Heart left ventricle (tissue), 16 donors: ENCODE measurements at regions of chr5 and their contacts with region 1.

Region 1: DNA sequence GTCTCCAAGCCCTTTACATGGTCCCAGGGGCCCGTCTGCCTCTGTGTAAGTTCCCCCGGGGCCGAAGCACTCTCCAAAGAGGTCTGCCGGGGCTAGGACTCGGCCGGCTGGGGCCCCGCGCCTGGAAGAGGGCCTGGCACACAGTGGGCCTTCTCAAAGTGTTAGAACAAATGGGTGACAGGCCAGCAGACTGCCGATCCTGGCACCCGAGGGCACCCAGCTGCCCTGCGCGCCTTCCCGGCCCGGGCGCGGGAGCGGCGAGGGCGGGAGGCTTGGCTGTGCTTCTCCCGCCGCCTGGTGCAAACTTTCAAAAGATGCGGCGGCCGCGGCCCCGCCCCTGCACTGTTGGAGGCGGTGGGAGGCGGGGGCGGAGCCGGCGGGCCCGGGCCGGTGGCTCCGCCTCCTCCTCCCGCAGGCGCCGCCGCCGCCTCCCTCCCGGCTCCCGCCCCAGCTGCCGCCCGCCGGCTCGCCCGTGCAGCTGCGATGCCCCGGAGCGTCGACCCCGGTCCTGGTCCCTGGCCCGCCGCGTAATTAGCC is at the start of gene NEURL1B:
- DNase-seq: peak; percentile 81 to 91 (median 89)
- ATAC-seq: peak; percentile 68 to 88 (median 82)
- H3K4me3 ChIP-seq: peak within 1 kb of the TSS; percentile 73 to 98 (median 88)
- H3K27ac ChIP-seq: peak within 1 kb of the TSS; percentile 93 to 99 (median 98)
- H3K4me1 ChIP-seq: peaks cover 0 to 50% (median 26%) of the 10 kb centered on the region in 12 donors
- H3K27me3 ChIP-seq: peaks cover 0 to 11% (median 0%) of the 10 kb centered on the region in 9 donors
- CTCF ChIP-seq: peak in 7 of 12 donors; percentile 5 to 53 (median 29)
- POLR2A ChIP-seq: peak in 1 of 2 donors; percentile 59
- total RNA-seq, gene NEURL1B: 16.1 to 47.1 (median 25.8) TPM

Region 2: DNA sequence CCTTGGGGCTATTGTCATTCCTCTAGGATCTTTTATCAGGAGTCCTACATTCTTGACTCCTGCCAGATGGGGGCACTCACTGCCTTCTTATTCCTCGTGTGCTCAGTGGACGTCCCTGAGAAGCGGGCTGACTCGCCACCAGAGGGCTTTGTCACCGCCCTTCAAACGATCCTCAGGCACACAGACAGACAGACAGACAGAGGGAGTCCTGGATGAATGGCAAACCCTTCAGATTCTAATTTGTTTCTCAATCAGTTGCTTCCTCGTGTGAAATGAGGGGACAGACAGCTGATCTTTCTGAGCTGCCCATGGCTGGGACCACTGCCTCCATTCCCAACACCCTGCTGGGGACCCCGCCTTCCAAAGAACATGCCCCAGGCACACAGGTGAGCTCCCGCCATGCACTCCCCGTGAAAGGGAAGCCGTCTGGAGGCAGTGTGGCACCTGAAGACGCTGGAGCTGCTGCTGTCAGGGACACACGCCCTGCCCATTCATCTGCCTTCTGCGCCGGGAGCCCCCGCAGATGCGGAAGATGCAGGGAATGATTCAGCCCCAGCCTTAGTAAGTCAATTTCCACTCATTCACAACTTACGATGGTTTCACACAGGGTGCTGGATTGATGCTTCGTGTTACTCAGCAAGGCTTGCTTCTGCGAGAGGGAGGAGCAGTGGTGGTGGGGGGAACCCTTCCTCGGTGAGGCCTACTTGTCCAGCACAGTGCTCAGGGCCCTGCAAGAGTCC is 161.7 kb before region 1 on chr5:
- intact Hi-C with region 1: loop called in 8 of 10 experiments (anchors 1 to 5 kb)
- DNase-seq: peak; percentile 88 to 93 (median 89)
- ATAC-seq: peak; percentile 88 to 97 (median 96)
- H3K4me3 ChIP-seq: peak overlapping the region in 7 of 12 donors; percentile 8 to 39 (median 23)
- H3K27ac ChIP-seq: peak overlapping the region in 11 of 12 donors; percentile 31 to 81 (median 72)
- H3K4me1 ChIP-seq: peaks cover 0 to 27% (median 12%) of the 10 kb centered on the region in 12 donors
- H3K27me3 ChIP-seq: no peaks in the 10 kb centered on the region
- CTCF ChIP-seq: peak; percentile 75 to 97 (median 89)
- POLR2A ChIP-seq: no peak

Region 3: DNA sequence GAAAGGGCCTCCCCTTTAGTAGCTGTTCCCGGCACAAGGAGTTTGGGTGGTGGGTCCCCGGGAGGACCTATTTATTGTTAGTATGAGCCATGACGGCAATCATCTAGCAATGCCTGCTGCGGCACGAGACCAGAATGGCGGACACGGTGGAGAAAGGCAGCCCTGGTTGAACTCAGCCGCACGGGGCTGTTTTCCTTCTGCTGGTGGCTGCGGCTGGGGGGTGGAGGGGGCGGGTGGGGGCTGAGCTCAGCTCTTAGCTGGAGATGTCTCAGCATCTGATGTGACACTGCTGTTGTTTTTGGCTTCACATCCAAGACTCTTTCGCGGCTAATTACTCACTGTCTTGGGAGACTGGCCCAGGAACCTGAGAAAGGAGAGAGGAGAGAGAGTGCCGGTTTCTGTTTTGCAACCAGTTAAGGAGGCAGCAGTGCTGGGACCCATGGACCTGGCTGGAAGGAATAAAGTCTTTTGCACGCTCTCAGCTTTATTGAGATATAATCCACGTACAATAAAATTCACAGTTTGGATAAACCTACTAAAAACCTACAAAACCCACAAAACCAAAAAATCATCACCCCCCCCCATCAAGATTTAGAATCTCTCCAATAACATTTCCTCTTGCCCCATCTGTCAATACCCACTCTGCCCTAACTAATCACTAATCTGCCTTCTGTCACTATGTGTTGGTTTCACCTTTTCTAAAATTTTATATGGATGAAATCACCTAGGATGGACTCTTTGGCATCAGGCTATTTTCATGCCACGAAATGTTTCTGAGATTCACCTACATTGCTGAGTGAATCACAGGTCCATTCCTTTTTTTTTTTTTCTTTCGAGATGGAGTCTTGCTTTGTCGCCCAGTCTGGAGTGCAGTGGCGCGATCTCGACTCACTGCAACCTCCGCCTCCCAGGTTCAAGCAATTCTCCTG is 81.6 kb before region 1 on chr5:
- intact Hi-C with region 1: loop called in 3 of 10 experiments (anchors 5 to 10 kb)
- DNase-seq: peak; percentile 43 to 80 (median 66)
- ATAC-seq: peak; percentile 13 to 75 (median 63)
- H3K4me3 ChIP-seq: peak overlapping the region in 10 of 12 donors; percentile 5 to 50 (median 24)
- H3K27ac ChIP-seq: peak overlapping the region in 11 of 12 donors; percentile 68 to 90 (median 78)
- H3K4me1 ChIP-seq: peaks cover 10 to 46% (median 34%) of the 10 kb centered on the region in 12 donors
- H3K27me3 ChIP-seq: no peaks in the 10 kb centered on the region
- CTCF ChIP-seq: no peak
- POLR2A ChIP-seq: no peak

Region 4: GRCh38 chr5:172603251-172603806 is 37.6 kb before region 1 on chr5:
- intact Hi-C with region 1: loop called in 3 of 10 experiments (anchors 5 kb)
- DNase-seq: peak in 3 of 5 donors; percentile 59 to 68 (median 68)
- ATAC-seq: peak in 3 of 4 donors; percentile 17 to 68 (median 55)
- H3K4me3 ChIP-seq: peak overlapping the region in 5 of 12 donors; percentile 14 to 29 (median 17)
- H3K27ac ChIP-seq: peak overlapping the region; percentile 76 to 94 (median 83)
- H3K4me1 ChIP-seq: peaks cover 0 to 69% (median 37%) of the 10 kb centered on the region in 12 donors
- H3K27me3 ChIP-seq: no peaks in the 10 kb centered on the region
- CTCF ChIP-seq: no peak
- POLR2A ChIP-seq: no peak

Region 5: GRCh38 chr5:172688349-172689217 is 47.7 kb after region 1 on chr5:
- intact Hi-C with region 1: loop called in 5 of 10 experiments (anchors 5 to 10 kb)
- DNase-seq: peak in 3 of 5 donors; percentile 50 to 68 (median 61)
- ATAC-seq: peak; percentile 17 to 59 (median 52)
- H3K4me3 ChIP-seq: no peak overlapping the region
- H3K27ac ChIP-seq: peak overlapping the region in 11 of 12 donors; percentile 9 to 89 (median 74)
- H3K4me1 ChIP-seq: peaks cover 5 to 86% (median 71%) of the 10 kb centered on the region in 12 donors
- H3K27me3 ChIP-seq: no peaks in the 10 kb centered on the region
- CTCF ChIP-seq: no peak
- POLR2A ChIP-seq: no peak